ENCODE measurements at regions of chr2 and their contacts with region 1.

Region 1: GRCh38 chr2:189751080-189751658 is 11.4 kb downstream of the OSGEPL1 start:
- DNase-seq: no peak
- H3K4me3 ChIP-seq: no peak overlapping the region
- CTCF ChIP-seq: peak; percentile 57

Region 2: GRCh38 chr2:189685540-189686229 is 65.5 kb before region 1 on chr2:
- CTCF ChIA-PET with region 1: no interaction called
- POLR2A ChIA-PET with region 1: no interaction called
- DNase-seq: peak; percentile 14
- H3K4me3 ChIP-seq: no peak overlapping the region
- CTCF ChIP-seq: no peak

Region 3: GRCh38 chr2:189729430-189729829 is 21.7 kb before region 1 on chr2:
- CTCF ChIA-PET with region 1: interaction called, 24 read pairs
- POLR2A ChIA-PET with region 1: no interaction called
- DNase-seq: no peak
- H3K4me3 ChIP-seq: no peak overlapping the region
- CTCF ChIP-seq: no peak

Region 4: DNA sequence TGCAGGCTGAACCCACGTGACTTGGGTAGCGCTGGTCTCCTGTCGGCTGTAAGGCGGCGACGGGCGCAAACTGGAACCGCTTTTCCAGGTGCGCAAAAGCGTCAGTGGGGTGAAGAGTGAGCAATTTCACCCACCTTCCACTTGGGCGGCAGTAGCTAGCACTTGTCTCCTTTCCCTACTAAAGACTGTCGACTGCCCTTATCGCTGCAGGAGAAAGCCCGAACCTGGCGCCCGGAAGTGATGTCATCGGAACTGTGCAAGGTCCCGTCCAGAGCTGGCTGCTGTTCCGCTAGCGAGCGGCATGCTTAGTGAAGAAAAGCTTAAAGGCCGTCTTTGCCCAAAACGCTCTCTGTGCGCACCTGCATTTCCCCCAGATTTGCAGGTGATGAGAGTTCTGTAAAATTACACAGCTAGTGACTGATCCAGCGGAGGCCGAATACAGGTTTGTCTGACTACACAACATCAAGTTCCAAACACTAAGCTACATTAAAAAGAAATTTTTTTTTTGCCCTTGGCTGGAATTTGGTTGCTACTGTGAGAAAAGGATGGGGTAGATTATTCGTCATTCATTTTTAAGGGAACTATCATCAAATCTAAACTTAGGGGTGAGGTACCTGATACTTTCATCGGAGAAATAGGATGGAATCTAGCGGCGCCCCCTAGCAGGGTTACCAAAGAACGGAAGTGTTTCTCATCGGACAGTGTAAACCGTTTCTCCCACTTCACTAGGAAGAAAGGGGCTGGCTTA is 11.6 kb after region 1 on chr2 and contains the start of gene OSGEPL1:
- CTCF ChIA-PET with region 1: interaction called, 99 read pairs
- POLR2A ChIA-PET with region 1: interaction called, 3 read pairs
- DNase-seq: no peak
- H3K4me3 ChIP-seq: peak within 1 kb of the TSS; percentile 93
- CTCF ChIP-seq: peak; percentile 72

Measured in AG04449 (cell line).